ENCODE measurements at regions of chr4 and their contacts with region 1.

Region 1: DNA sequence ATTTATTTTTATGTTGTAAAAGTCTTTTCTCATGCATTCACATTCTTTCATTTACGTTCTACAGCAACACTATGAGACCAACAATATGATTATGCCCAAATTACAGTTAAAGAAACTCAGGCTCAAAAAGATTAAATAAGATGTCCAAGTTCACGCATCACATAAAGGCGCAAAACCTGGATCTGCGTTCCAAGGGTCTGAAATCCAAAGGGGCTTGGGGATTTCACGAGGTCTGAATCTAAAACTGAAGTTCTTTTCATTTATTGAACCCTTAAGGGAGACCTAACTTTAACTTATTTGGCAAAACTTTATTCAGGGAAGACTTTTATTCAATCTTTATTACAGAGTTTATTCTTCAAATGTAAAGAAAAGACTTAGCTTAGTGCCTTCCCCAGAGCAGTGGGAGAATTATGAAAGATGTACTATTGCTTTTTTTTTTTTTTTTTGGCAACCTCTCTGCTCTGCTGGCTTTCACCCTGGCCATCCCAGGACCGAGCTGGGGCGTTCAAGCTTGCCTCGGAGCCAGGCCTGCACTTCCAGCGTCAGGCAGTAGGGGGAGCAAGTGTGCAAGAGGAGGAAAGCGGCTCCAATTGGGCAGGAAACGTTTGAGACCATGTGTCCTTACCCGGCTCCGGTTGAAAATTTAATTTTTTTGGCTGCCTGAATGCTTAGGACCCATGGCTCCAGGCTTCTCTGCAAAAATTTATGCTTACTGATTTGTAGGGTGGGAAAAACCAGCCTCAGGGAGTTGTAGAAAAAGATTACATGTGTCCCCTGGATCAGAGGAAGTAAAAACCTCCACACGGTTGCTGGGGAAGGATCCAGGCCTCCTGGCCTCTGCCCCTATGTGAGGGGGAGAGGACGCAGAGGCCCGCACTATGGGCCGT is 344.3 kb upstream of the KLF3 start:
- DNase-seq: peak; percentile 75 to 90 (median 83)
- H3K4me3 ChIP-seq: peak overlapping the region; percentile 43
- H3K4me3 Mint-ChIP-seq: peak overlapping the region; percentile 81 to 94 (median 88)
- H3K27ac ChIP-seq: peak overlapping the region; percentile 20
- H3K27ac Mint-ChIP-seq: peak overlapping the region; percentile 80 to 97 (median 94)
- H3K4me1 ChIP-seq: peaks cover 44% of the 10 kb centered on the region
- H3K4me1 Mint-ChIP-seq: peaks cover 32 to 38% (median 35%) of the 10 kb centered on the region in 3 donors
- H3K27me3 ChIP-seq: no peaks in the 10 kb centered on the region
- H3K27me3 Mint-ChIP-seq: no peaks in the 10 kb centered on the region

Region 2: DNA sequence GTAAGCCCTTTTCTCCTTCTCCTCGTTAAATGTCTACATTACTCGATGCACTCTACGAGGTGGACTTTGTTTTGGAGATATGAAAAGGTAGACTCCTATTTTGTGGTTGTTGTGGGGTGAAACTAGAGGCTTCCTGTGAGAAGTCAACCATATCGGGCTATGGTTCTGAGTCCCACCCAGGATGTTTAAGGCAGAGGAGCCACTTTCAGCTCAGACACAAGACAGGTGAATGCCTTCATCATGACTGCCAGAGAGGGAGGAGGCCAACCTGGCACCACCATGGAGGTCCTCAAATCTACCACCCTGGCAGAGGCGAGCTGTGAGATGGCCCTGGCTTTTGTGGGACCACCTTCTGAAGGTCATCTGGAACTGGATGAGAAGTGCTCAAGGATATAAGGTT is 189.9 kb after region 1 on chr4:
- CTCF ChIA-PET with region 1: interaction called, 16 read pairs
- POLR2A ChIA-PET with region 1: no interaction called
- DNase-seq: peak in 4 of 5 donors; percentile 22 to 80 (median 72)
- H3K4me3 ChIP-seq: peak overlapping the region; percentile 68
- H3K4me3 Mint-ChIP-seq: peak overlapping the region; percentile 70 to 93 (median 80)
- H3K27ac ChIP-seq: peak overlapping the region; percentile 35
- H3K27ac Mint-ChIP-seq: peak overlapping the region; percentile 59 to 95 (median 88)
- H3K4me1 ChIP-seq: peaks cover 75% of the 10 kb centered on the region
- H3K4me1 Mint-ChIP-seq: peaks cover 83 to 95% (median 90%) of the 10 kb centered on the region in 3 donors
- H3K27me3 ChIP-seq: no peaks in the 10 kb centered on the region
- H3K27me3 Mint-ChIP-seq: peaks cover 0 to 6% of the 10 kb centered on the region in 2 donors

Region 3: GRCh38 chr4:38523524-38524448 is 204.1 kb after region 1 on chr4:
- CTCF ChIA-PET with region 1: interaction called, 6 read pairs
- POLR2A ChIA-PET with region 1: interaction called, 11 read pairs
- DNase-seq: peak in 4 of 5 donors; percentile 6 to 64 (median 34)
- H3K4me3 ChIP-seq: peak overlapping the region; percentile 18
- H3K4me3 Mint-ChIP-seq: peak overlapping the region; percentile 72 to 93 (median 86)
- H3K27ac ChIP-seq: peak overlapping the region; percentile 43
- H3K27ac Mint-ChIP-seq: peak overlapping the region; percentile 68 to 92 (median 85)
- H3K4me1 ChIP-seq: peaks cover 5% of the 10 kb centered on the region
- H3K4me1 Mint-ChIP-seq: peaks cover 33 to 55% (median 40%) of the 10 kb centered on the region in 3 donors
- H3K27me3 ChIP-seq: no peaks in the 10 kb centered on the region
- H3K27me3 Mint-ChIP-seq: peaks cover 0 to 2% of the 10 kb centered on the region in 2 donors

Region 4: GRCh38 chr4:38654273-38654672 is 334.6 kb after region 1 on chr4:
- CTCF ChIA-PET with region 1: interaction called, 10 read pairs
- POLR2A ChIA-PET with region 1: interaction called, 3 read pairs
- DNase-seq: peak; percentile 16 to 86 (median 79)
- H3K4me3 ChIP-seq: peak overlapping the region; percentile 63
- H3K4me3 Mint-ChIP-seq: peak overlapping the region; percentile 76 to 93 (median 81)
- H3K27ac ChIP-seq: peak overlapping the region; percentile 97
- H3K27ac Mint-ChIP-seq: peak overlapping the region; percentile 99 to 100 (median 100)
- H3K4me1 ChIP-seq: peaks cover 55% of the 10 kb centered on the region
- H3K4me1 Mint-ChIP-seq: peaks cover 53 to 68% (median 61%) of the 10 kb centered on the region in 3 donors
- H3K27me3 ChIP-seq: no peaks in the 10 kb centered on the region
- H3K27me3 Mint-ChIP-seq: peaks cover 0 to 2% of the 10 kb centered on the region in 2 donors

Region 5: DNA sequence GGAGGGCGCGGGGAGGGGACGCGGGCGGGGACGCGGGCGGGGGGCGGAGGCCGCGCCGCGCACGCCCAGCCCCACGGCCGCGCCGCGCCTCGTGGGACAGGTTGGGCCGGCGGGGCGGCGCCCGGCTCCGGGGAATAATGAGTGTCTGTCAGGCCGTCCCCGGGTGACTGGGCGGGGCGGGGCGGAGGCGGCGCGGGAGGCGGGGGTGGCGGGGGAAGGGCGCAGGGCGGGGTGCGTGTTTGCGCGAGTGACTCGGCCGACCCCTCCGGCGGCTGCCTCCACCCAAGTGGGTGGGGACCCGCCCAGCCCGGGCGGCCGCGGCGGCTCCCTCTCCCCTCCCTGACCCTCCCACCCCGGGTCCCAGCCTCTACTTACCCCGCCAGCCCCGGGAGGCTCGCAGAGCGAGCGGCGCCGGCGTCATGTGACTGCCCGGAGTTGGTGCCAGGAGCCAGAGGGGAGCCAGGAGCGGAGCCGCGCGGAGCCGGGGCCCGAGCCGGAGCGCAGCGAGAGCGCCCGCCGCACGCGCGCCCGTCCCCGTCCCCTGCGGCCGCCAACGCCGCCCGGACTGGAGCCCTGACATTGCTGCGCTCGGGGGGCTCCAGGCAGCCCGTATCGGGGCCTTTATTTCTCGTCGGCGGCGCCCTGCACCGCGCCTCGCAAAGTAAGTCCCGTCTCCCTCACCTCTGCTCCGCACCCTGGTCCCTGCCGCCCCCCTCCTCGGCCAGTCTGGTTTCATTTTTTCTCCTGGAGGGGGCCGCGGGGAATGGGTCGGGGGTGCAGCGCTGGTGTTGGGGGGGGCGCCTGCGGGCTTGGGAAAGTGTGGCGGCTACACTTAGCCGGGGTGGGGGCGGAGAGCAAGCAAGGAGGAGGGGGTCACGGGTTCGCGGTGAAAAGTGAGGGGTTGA is 344.4 kb after region 1 on chr4 and contains the start of gene KLF3:
- CTCF ChIA-PET with region 1: interaction called, 45 read pairs
- POLR2A ChIA-PET with region 1: interaction called, 7 read pairs
- DNase-seq: peak; percentile 91 to 96 (median 93)
- H3K4me3 ChIP-seq: peak within 1 kb of the TSS; percentile 67
- H3K4me3 Mint-ChIP-seq: peak within 1 kb of the TSS; percentile 86 to 100 (median 96)
- H3K27ac ChIP-seq: peak within 1 kb of the TSS; percentile 85
- H3K27ac Mint-ChIP-seq: peak within 1 kb of the TSS; percentile 84 to 100 (median 99)
- H3K4me1 ChIP-seq: peaks cover 44% of the 10 kb centered on the region
- H3K4me1 Mint-ChIP-seq: peaks cover 58 to 74% (median 69%) of the 10 kb centered on the region in 3 donors
- H3K27me3 ChIP-seq: no peaks in the 10 kb centered on the region
- H3K27me3 Mint-ChIP-seq: no peaks in the 10 kb centered on the region
- total RNA-seq, gene KLF3: 15.2 to 17.1 TPM

Region 6: GRCh38 chr4:38675146-38676121 is 355.7 kb after region 1 on chr4:
- CTCF ChIA-PET with region 1: interaction called, 100 read pairs
- POLR2A ChIA-PET with region 1: interaction called, 7 read pairs
- DNase-seq: peak; percentile 70 to 85 (median 75)
- H3K4me3 ChIP-seq: peak overlapping the region; percentile 26
- H3K4me3 Mint-ChIP-seq: peak overlapping the region; percentile 15 to 88 (median 71)
- H3K27ac ChIP-seq: no peak overlapping the region
- H3K27ac Mint-ChIP-seq: peak overlapping the region; percentile 65 to 95 (median 91)
- H3K4me1 ChIP-seq: peaks cover 88% of the 10 kb centered on the region
- H3K4me1 Mint-ChIP-seq: peaks cover 87 to 95% (median 92%) of the 10 kb centered on the region in 3 donors
- H3K27me3 ChIP-seq: no peaks in the 10 kb centered on the region
- H3K27me3 Mint-ChIP-seq: peaks cover 0 to 4% of the 10 kb centered on the region in 2 donors

Region 7: GRCh38 chr4:38730830-38731646 is 411.3 kb after region 1 on chr4:
- CTCF ChIA-PET with region 1: interaction called, 24 read pairs
- POLR2A ChIA-PET with region 1: no interaction called
- DNase-seq: peak; percentile 70 to 87 (median 71)
- H3K4me3 ChIP-seq: no peak overlapping the region
- H3K4me3 Mint-ChIP-seq: peak overlapping the region in 5 of 7 donors; percentile 19 to 52 (median 46)
- H3K27ac ChIP-seq: no peak overlapping the region
- H3K27ac Mint-ChIP-seq: peak overlapping the region in 1 of 8 donors; percentile 65
- H3K4me1 ChIP-seq: peaks cover 10% of the 10 kb centered on the region
- H3K4me1 Mint-ChIP-seq: peaks cover 10 to 22% (median 19%) of the 10 kb centered on the region in 3 donors
- H3K27me3 ChIP-seq: no peaks in the 10 kb centered on the region
- H3K27me3 Mint-ChIP-seq: peaks cover 0 to 1% of the 10 kb centered on the region in 2 donors

Measured in CD8-positive, alpha-beta memory T cell (primary cell).